HEK293 (cell line): ENCODE measurements at regions of chr1 and their contacts with region 1.

Region 1: DNA sequence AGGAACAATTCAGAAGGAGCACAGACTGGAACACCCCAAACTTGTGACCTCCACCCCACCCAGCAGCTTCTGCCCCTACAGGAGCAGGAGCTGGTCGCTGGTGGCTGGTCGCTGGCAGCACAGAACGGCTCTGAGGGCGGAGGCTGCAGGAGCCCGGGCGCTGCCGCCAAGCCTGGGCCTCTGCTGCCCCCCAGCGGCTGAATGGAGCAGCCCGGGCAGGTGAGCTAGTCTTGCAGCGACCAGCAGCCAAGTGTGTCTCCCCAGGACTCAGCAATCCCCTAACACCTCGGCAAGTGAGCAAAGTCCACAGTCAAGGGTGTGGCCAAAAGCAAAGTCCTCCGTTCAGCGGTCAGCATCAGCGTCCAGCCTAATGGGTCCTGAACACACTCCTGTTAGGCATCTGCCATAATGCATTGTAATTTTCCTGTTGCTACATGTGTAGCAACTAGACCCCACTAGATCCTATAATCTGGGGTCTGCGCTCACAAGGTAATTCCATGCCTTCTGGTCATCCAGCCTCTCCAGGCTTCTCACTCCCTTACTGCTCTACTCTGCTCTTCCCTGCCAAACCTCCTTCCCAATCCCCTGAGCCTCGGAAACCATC is 12.1 kb upstream of the GJB5 start:
- H3K4me3 ChIP-seq: no peak overlapping the region
- H3K27ac ChIP-seq: no peak overlapping the region
- H3K4me1 ChIP-seq: no peaks in the 10 kb centered on the region
- CTCF ChIP-seq: peak; percentile 93

Region 2: GRCh38 chr1:34389974-34390373 is 352.8 kb before region 1 on chr1:
- CTCF ChIA-PET with region 1: no interaction called
- POLR2A ChIA-PET with region 1: no interaction called
- H3K4me3 ChIP-seq: no peak overlapping the region
- H3K27ac ChIP-seq: no peak overlapping the region
- H3K4me1 ChIP-seq: no peaks in the 10 kb centered on the region
- CTCF ChIP-seq: no peak

Region 3: GRCh38 chr1:34460193-34460592 is 282.6 kb before region 1 on chr1:
- CTCF ChIA-PET with region 1: interaction called, 15 read pairs
- POLR2A ChIA-PET with region 1: no interaction called
- H3K4me3 ChIP-seq: no peak overlapping the region
- H3K27ac ChIP-seq: no peak overlapping the region
- H3K4me1 ChIP-seq: no peaks in the 10 kb centered on the region
- CTCF ChIP-seq: no peak

Region 4: DNA sequence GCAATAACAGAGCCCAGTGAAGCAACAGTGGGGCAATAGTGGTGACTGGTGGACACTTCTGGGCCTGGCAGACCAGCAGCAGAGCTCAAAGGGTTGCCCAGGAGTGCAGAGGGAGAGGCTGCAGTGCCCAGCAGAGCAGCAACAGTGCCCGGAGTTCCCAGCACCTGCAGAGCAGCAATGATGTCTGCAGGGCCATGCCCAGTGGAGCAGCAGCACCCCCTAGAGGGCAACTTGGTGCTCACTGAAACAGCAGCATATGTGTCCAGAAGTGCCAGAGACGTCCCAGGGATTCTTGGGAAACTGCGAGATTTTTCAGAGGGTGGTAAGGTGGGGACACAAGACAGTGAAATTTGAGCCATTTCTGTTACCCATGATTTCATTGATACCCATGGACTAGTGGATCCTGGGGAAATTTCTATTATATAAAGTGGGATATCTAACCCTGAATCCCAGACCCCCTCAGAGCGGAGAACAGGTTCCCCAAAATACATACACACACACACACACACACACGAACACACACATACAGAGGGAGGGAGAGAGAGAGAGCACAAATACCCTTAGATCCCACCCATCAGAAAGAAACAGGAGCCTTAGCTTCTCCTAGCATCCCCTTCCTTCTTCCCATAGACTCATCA is 144.8 kb before region 1 on chr1:
- CTCF ChIA-PET with region 1: interaction called, 19 read pairs
- POLR2A ChIA-PET with region 1: no interaction called
- H3K4me3 ChIP-seq: no peak overlapping the region
- H3K27ac ChIP-seq: no peak overlapping the region
- H3K4me1 ChIP-seq: no peaks in the 10 kb centered on the region
- CTCF ChIP-seq: peak; percentile 88

Region 5: GRCh38 chr1:34656731-34657130 is 86.0 kb before region 1 on chr1:
- CTCF ChIA-PET with region 1: no interaction called
- POLR2A ChIA-PET with region 1: no interaction called
- H3K4me3 ChIP-seq: no peak overlapping the region
- H3K27ac ChIP-seq: no peak overlapping the region
- H3K4me1 ChIP-seq: no peaks in the 10 kb centered on the region
- CTCF ChIP-seq: no peak

Region 6: GRCh38 chr1:34721646-34722355 is 21.0 kb before region 1 on chr1:
- CTCF ChIA-PET with region 1: interaction called, 26 read pairs
- POLR2A ChIA-PET with region 1: no interaction called
- H3K4me3 ChIP-seq: no peak overlapping the region
- H3K27ac ChIP-seq: no peak overlapping the region
- H3K4me1 ChIP-seq: no peaks in the 10 kb centered on the region
- CTCF ChIP-seq: no peak

Region 7: GRCh38 chr1:34726861-34727260 is 15.9 kb before region 1 on chr1:
- CTCF ChIA-PET with region 1: interaction called, 26 read pairs
- POLR2A ChIA-PET with region 1: no interaction called
- H3K4me3 ChIP-seq: no peak overlapping the region
- H3K27ac ChIP-seq: no peak overlapping the region
- H3K4me1 ChIP-seq: no peaks in the 10 kb centered on the region
- CTCF ChIP-seq: no peak

Region 8: GRCh38 chr1:34754964-34755637 is 12.3 kb after region 1 on chr1 and contains the start of gene GJB5:
- CTCF ChIA-PET with region 1: interaction called, 33 read pairs
- POLR2A ChIA-PET with region 1: no interaction called
- H3K4me3 ChIP-seq: no peak within 1 kb of the TSS
- H3K27ac ChIP-seq: no peak within 1 kb of the TSS
- H3K4me1 ChIP-seq: no peaks in the 10 kb centered on the region
- CTCF ChIP-seq: no peak

Region 9: GRCh38 chr1:35085421-35085820 is 342.7 kb after region 1 on chr1:
- CTCF ChIA-PET with region 1: no interaction called
- POLR2A ChIA-PET with region 1: no interaction called
- H3K4me3 ChIP-seq: no peak overlapping the region
- H3K27ac ChIP-seq: no peak overlapping the region
- H3K4me1 ChIP-seq: no peaks in the 10 kb centered on the region
- CTCF ChIP-seq: no peak